HCT116 (cell line): ENCODE measurements at regions of chr11 and their contacts with region 1.

Region 1: DNA sequence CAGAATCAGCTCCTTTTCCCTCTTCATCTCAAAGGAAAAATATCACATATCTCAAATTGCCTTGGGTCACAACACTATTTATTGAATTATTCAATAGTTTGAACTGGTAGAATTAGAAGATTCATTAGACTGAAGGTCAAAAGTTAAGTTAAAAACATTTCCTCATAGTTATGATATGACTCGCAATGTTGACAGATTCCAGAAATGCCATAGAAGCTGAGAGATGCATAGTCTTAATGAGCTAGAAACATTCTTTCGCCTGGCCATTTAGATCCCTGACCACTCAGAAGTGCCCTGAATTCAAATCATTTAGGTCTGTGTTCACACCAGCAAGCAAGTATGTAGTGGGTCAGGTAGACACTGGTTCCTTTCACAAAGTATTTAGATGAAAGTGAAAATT is 44.4 kb downstream of the FAT3 start:
- DNase-seq: no peak
- ATAC-seq: no peak
- H3K4me3 ChIP-seq: no peak overlapping the region
- H3K27ac ChIP-seq: no peak overlapping the region
- H3K4me1 ChIP-seq: no peaks in the 10 kb centered on the region
- H3K27me3 ChIP-seq: no peaks in the 10 kb centered on the region
- CTCF ChIP-seq: no peak
- POLR2A ChIP-seq: no peak
- RAD21 ChIP-seq: no peak

Region 2: GRCh38 chr11:92101920-92102319 is 167.1 kb before region 1 on chr11:
- CTCF ChIA-PET with region 1: no interaction called
- POLR2A ChIA-PET with region 1: no interaction called
- RAD21 ChIA-PET with region 1: no interaction called
- intact Hi-C with region 1: no loop called
- DNase-seq: no peak
- ATAC-seq: no peak
- H3K4me3 ChIP-seq: no peak overlapping the region
- H3K27ac ChIP-seq: no peak overlapping the region
- H3K4me1 ChIP-seq: no peaks in the 10 kb centered on the region
- H3K27me3 ChIP-seq: no peaks in the 10 kb centered on the region
- CTCF ChIP-seq: no peak
- POLR2A ChIP-seq: no peak
- RAD21 ChIP-seq: no peak

Region 3: DNA sequence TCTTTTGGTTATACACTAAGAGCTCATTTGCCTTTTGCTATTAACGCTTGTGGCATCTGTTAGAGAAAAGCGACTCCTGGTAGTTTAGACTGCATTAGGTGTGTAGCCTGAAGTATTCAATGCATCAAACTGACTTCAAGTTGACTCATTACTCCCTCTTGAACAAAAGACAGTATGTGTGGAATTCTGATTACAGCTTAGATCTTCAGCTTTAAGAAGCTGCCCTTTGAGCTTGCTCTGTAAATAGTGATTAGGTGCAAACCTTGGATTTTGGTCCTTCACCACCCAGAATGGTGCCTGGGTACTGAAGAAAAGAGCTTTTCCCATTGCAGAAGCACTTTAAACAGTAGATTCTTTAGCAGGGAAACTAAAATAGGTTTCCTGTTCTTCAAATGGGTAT is 17.7 kb after region 1 on chr11:
- CTCF ChIA-PET with region 1: no interaction called
- POLR2A ChIA-PET with region 1: no interaction called
- RAD21 ChIA-PET with region 1: no interaction called
- intact Hi-C with region 1: loop called (anchors 1 kb)
- DNase-seq: no peak
- ATAC-seq: no peak
- H3K4me3 ChIP-seq: no peak overlapping the region
- H3K27ac ChIP-seq: no peak overlapping the region
- H3K4me1 ChIP-seq: no peaks in the 10 kb centered on the region
- H3K27me3 ChIP-seq: no peaks in the 10 kb centered on the region
- CTCF ChIP-seq: no peak
- POLR2A ChIP-seq: no peak
- RAD21 ChIP-seq: no peak